HEK293 (cell line): ENCODE measurements at regions of chr15 and their contacts with region 1.

Region 1: DNA sequence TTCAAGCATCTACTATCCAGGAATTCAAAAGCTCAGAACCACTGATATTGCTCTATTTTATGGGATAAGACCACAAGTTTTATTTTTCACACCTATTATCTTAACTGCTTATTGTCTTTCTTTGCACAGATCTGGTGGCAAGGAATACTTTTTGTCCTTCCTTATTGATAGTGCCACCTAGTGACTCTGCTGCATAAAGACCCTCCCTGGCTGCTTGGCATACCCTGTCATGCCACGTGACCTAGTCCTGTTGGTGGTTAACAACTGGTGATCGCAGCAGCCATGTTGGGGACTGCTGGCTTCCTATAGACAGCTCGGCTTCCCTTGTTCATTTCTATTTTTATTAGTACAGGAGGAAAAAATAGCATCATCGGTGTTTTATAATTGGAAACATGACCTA is 236.3 kb downstream of the MEX3B start:
- H3K4me3 ChIP-seq: no peak overlapping the region
- H3K27ac ChIP-seq: no peak overlapping the region
- H3K4me1 ChIP-seq: no peaks in the 10 kb centered on the region
- CTCF ChIP-seq: no peak

Region 2: DNA sequence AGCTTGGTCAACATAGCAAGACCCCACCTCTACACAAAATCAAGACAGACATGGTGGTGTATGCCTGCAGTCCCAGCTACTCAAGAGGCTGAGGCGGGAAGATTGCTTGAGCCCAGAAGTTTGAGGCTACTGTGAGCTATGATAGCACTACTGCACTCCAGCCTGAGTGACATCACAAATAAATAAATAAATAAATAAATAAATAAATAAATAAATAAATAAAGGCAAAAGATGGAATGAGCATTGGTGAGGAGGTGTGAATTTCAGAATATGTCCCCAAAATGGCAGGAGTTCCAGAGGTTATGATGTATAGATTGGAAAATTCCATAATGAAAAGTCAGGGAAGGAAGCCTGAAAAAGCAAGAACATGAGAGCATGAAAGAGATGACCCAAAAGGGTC is 13.6 kb before region 1 on chr15:
- CTCF ChIA-PET with region 1: interaction called, 11 read pairs
- POLR2A ChIA-PET with region 1: no interaction called
- H3K4me3 ChIP-seq: no peak overlapping the region
- H3K27ac ChIP-seq: no peak overlapping the region
- H3K4me1 ChIP-seq: no peaks in the 10 kb centered on the region
- CTCF ChIP-seq: no peak